ENCODE measurements at regions of chr6 and their contacts with region 1.

Region 1: GRCh38 chr6:31702819-31703522 is at the start of gene ABHD16A:
- DNase-seq: peak; percentile 97
- ATAC-seq: peak; percentile 94
- H3K4me3 Mint-ChIP-seq: peak within 1 kb of the TSS; percentile 97
- H3K27ac Mint-ChIP-seq: peak within 1 kb of the TSS; percentile 94
- H3K4me1 Mint-ChIP-seq: peaks cover 20% of the 10 kb centered on the region
- H3K27me3 Mint-ChIP-seq: no peaks in the 10 kb centered on the region
- total RNA-seq, gene ABHD16A: 57.8 to 64.0 TPM

Region 2: GRCh38 chr6:31680840-31681671 is 21.9 kb before region 1 on chr6 and contains the start of gene LY6G5C:
- POLR2A ChIA-PET with region 1: interaction called, 10 read pairs
- DNase-seq: peak; percentile 64
- ATAC-seq: peak; percentile 57
- H3K4me3 Mint-ChIP-seq: peak within 1 kb of the TSS; percentile 79
- H3K27ac Mint-ChIP-seq: peak within 1 kb of the TSS; percentile 77
- H3K4me1 Mint-ChIP-seq: peaks cover 28% of the 10 kb centered on the region
- H3K27me3 Mint-ChIP-seq: no peaks in the 10 kb centered on the region
- total RNA-seq, gene LY6G5C: 3.5 to 4.6 TPM

Region 3: DNA sequence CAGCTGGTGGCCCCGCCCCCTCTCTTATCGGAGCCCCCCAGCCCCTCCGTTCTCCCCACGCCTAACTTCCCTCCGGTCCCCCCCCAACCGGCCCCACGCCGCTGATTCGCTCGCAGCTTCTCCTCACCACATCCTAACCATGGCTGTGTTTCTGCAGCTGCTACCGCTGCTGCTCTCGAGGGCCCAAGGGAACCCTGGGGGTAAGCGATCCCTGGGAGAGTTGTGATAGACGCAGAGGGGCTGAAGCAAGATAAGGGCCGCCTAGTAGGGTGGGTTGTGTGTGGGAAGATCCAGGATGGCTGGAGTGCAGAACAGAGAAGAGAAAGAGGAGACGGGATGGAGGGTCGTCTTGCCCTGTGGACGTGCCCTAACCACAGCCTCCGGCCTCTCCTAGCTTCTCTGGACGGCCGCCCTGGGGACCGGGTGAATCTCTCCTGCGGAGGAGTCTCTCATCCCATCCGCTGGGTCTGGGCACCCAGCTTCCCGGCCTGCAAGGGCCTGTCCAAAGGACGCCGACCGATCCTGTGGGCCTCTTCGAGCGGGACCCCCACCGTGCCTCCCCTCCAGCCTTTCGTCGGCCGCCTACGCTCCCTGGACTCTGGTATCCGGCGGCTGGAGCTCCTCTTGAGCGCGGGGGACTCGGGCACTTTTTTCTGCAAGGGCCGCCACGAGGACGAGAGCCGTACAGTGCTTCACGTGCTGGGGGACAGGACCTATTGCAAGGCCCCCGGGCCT is 20.4 kb after region 1 on chr6 and contains the start of gene MPIG6B:
- POLR2A ChIA-PET with region 1: interaction called, 10 read pairs
- DNase-seq: peak; percentile 51
- ATAC-seq: peak; percentile 55
- H3K4me3 Mint-ChIP-seq: peak within 1 kb of the TSS; percentile 69
- H3K27ac Mint-ChIP-seq: peak within 1 kb of the TSS; percentile 85
- H3K4me1 Mint-ChIP-seq: peaks cover 35% of the 10 kb centered on the region
- H3K27me3 Mint-ChIP-seq: peaks cover 3% of the 10 kb centered on the region
- total RNA-seq, gene MPIG6B: 1.2 to 1.5 TPM